AG04449 (cell line): ENCODE measurements at regions of chr12 and their contacts with region 1.

Region 1: GRCh38 chr12:10562306-10562933 is 51.0 kb downstream of the MAGOHB start:
- DNase-seq: no peak
- H3K4me3 ChIP-seq: no peak overlapping the region
- CTCF ChIP-seq: peak; percentile 31

Region 2: DNA sequence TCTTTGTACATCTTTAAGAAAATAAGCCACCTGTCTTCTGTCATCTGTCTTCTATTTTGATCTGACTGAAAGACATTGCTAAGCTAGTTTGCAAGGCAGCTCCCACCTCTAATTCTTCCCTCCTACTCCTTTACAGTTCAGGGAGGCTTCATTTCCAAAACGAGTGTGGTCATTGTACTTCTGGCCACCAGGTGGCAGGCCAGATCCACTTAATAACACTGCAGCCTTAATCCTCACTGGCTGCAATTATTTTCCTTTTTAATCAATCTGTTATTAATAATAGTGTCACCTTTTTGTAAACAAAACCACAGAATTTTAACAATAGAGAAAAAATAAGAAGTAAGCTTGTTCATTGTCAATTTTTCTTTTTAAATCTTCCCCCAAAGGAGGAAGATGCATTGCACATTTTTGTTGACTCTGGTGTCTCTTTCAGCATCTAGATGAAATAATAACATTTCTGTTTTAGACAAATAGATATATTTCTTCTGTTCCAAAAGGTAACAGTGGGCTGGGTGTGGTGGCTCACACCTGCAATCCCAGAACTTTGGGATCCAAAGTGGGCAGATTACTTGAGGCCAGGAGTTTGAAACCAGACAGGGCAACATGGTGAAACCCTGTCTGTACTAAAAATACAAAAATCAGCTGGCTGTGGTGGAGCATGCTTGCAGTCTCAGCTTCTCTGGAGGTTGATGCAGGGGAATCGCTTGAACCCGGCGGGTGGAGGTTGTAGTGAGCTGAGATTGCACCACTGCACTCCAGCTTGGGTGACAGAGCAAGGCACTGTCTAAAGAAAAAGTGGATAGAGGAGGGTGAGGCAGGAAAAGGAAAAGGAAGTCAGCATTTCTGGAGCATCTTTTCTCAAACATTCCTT is 326.4 kb before region 1 on chr12:
- CTCF ChIA-PET with region 1: interaction called, 47 read pairs
- POLR2A ChIA-PET with region 1: no interaction called
- DNase-seq: no peak
- H3K4me3 ChIP-seq: no peak overlapping the region
- CTCF ChIP-seq: peak; percentile 77

Region 3: GRCh38 chr12:10331642-10332239 is 230.7 kb before region 1 on chr12:
- CTCF ChIA-PET with region 1: interaction called, 33 read pairs
- POLR2A ChIA-PET with region 1: no interaction called
- DNase-seq: peak; percentile 2
- H3K4me3 ChIP-seq: no peak overlapping the region
- CTCF ChIP-seq: peak; percentile 69

Region 4: DNA sequence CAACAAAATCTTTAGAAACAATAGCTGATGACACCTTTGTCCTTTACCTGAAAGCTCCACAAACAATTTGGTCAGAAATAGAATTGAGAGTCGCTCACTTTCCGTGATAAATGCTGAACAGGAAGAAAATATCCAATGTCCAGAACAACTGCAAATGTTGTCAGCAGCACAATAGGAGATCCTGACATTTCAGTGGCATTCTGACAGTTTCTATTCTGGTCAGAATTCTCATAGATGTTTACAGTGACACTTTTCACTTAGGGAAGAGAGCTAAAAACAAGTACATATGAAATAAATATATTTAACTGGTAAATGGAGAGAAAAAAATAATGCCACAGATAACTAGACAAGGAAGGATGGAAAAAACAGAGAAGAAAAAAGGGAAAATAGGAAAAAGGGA is 11.9 kb after region 1 on chr12:
- CTCF ChIA-PET with region 1: interaction called, 10 read pairs
- POLR2A ChIA-PET with region 1: no interaction called
- DNase-seq: no peak
- H3K4me3 ChIP-seq: no peak overlapping the region
- CTCF ChIP-seq: no peak

Region 5: GRCh38 chr12:10584415-10584814 is 22.0 kb after region 1 on chr12:
- CTCF ChIA-PET with region 1: no interaction called
- POLR2A ChIA-PET with region 1: no interaction called
- DNase-seq: no peak
- H3K4me3 ChIP-seq: no peak overlapping the region
- CTCF ChIP-seq: no peak